ENCODE measurements at regions of chr19 and their contacts with region 1.

Region 1: DNA sequence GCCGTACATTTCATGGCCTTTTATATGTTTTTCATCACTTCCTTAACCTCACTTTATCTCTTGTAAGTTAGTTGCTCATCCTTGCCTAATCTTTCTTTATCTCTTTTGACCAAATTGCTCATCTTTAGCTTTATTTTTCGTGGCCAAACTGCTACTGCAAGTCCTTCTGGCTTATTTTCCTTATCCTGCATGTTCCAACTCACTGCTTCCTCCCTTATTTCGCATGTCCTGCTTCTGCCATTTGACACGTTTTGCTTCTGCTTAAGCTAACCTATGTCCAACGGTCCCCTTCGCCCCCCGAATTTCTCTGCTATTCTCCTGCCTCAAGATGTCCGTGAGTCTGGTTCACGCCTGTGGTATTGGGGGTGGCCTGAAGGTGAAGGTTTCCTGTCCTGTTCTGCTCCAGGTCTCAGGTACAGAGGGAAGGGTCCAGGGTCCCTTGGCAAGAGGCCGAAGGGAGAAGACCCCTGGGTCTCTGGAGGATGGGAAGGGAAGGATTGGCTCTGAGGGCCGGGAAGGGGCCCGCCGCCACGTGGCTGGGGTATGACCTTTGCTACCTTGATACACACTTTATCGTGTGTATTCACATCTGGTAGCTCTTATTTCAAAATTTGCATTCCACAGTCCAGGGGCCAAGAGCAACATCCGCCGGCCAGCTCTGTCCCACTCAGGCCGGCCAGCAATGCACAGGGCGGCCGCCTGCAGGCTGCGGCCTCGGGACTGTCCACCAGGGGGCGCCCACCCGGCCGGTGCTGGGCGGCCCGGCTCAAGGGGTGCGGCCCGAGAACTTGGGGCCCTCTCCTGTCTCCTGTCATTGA is 2.9 kb upstream of the C19orf85 start:
- DNase-seq: peak in 2 of 3 donors; percentile 49
- H3K4me3 ChIP-seq: no peak overlapping the region
- H3K27ac ChIP-seq: peak overlapping the region in 1 of 2 experiments; percentile 38
- H3K4me1 ChIP-seq: peaks cover 0 to 2% (median 1%) of the 10 kb centered on the region in 4 experiments
- H3K27me3 ChIP-seq: no peaks in the 10 kb centered on the region

Region 2: GRCh38 chr19:55494172-55494761 is 26.8 kb after region 1 on chr19:
- CTCF ChIA-PET with region 1: interaction called, 12 read pairs
- POLR2A ChIA-PET with region 1: no interaction called
- DNase-seq: peak in 2 of 3 donors; percentile 11 to 38
- H3K4me3 ChIP-seq: peak overlapping the region in 3 of 7 experiments; percentile 1 to 52 (median 36)
- H3K27ac ChIP-seq: no peak overlapping the region
- H3K4me1 ChIP-seq: peaks cover 0 to 6% (median 3%) of the 10 kb centered on the region in 4 experiments
- H3K27me3 ChIP-seq: peaks cover 0 to 28% (median 2%) of the 10 kb centered on the region in 5 experiments